Dendritic cell treated with granulocyte-macrophage colony-stimulating factor and Interleukin-4, amounts not matched to agents 40 ng/mL and 50 ng/mL, for 4 days (primary cell): ENCODE measurements at regions of chr1 and their contacts with region 1.

Region 1: GRCh38 chr1:54810100-54810942 is 9.2 kb upstream of the TTC22 start:
- H3K4me3 Mint-ChIP-seq: no peak overlapping the region
- H3K27ac Mint-ChIP-seq: no peak overlapping the region
- H3K4me1 Mint-ChIP-seq: peaks cover 10% of the 10 kb centered on the region
- H3K27me3 Mint-ChIP-seq: peaks cover 1% of the 10 kb centered on the region

Region 2: DNA sequence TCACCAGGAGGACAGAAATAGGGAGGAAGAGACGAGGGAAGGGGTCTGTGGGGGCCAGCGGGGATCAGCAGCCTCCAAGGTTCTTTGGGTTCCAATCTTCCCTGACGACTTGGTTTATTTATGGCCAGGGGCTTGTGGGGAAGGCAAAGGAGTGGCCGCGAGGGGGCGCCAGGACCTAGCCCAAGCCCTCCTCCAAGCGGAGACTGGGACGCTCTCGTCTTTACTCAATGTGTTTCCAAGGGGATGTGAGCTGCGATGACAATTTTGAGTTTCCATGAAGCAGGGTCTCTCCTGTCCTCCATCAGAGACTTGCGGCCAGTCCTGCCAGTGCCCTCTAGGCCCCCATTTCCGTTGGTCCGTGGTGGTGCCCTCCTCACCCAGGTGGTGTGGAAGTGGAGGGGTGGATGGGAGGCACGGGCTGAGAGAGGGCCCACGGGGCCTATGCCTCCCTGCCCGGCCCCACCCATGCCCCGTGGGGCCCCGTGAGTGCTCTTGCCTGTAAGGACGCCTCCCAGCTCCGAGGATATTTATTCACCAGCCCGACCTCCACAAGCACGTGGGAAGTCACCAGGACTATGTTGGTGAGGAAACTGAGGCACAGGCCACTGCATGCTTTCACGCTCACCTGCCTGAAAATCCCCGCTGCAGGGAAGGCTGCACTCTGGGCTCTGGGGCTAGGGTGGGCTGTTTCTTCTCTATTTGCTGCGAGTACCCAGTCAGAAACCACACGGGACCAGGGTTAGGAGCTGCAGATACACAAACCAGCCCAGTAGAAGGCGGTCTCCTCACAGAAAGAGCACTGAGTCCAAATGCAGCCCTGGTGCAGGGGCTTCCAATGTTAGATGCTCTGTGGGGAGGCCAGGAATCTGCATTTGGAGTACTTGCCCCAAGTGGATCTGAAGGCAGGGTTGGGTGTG is 1324.6 kb before region 1 on chr1:
- intact Hi-C with region 1: loop called (anchors 5 kb)
- H3K4me3 Mint-ChIP-seq: no peak overlapping the region
- H3K27ac Mint-ChIP-seq: no peak overlapping the region
- H3K4me1 Mint-ChIP-seq: no peaks in the 10 kb centered on the region
- H3K27me3 Mint-ChIP-seq: peaks cover 7% of the 10 kb centered on the region

Region 3: DNA sequence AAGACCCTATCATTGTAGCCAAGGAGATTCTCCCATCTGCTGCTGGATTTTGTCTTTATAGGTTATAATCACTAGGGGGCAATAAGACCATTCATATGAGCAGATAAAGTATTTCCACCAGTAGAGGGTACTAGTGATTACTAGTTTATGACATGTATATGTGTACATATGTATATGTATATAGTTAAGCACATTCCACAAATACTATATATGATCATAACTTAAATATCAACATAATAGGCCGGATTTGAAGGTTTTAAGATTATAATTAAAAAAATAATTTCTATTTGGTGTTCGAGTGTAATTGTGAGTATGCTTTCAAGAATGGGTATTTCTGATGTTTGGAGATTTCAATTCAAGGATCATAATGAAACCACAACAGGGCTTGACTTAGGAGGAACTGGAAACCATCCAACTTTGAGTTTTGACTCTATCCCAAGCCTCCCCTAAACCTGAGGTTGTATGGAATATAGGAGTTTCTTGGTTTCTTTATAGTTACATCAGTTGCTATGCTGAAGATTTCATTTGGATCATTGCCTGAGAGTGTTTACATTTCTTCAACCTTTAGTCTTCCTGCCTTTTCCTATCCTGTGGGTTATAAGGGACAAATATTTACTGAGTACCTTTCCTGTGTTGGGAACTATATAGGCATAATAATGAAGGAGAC is 740.0 kb before region 1 on chr1:
- intact Hi-C with region 1: loop called (anchors 2 kb)
- H3K4me3 Mint-ChIP-seq: no peak overlapping the region
- H3K27ac Mint-ChIP-seq: no peak overlapping the region
- H3K4me1 Mint-ChIP-seq: peaks cover 7% of the 10 kb centered on the region
- H3K27me3 Mint-ChIP-seq: no peaks in the 10 kb centered on the region

Region 4: DNA sequence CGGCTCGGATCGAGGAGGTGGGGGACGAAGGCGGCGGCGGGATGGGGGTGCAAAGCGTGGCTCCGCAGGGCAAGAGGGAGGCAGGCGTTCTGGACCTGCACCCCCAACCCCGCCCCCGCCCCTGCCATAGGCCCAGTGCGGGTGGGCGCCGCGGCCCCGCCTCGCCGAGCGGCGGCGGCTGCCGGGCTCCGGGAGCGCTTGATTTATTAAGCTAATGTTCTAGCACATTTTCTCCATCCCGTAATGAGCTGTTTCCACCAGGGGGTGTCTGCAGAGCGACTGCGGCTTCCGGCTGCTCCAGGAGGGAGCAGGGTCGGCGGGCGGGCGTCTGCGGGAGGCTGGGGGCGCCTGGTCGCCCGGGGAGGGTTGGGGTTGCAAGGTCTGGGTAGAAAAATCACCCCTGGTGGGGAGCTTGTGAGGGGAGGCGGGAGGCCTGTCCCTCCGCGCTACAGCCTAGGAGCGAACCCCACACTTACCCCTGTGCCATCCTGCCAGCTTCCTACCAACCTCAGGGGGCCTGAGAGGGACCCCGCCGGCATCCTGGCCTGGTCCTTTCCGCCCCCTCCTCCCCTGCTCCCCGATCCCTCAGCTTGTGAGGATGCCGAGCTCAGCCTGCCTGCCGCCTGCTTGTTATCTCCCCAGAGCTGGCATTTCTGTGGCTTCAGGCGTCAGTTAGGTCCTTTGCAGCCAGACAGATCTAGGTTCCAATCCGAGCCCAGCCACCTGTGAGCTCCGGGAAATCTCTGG is 310.8 kb before region 1 on chr1:
- intact Hi-C with region 1: loop called (anchors 10 kb)
- H3K4me3 Mint-ChIP-seq: peak overlapping the region; percentile 24
- H3K27ac Mint-ChIP-seq: no peak overlapping the region
- H3K4me1 Mint-ChIP-seq: peaks cover 5% of the 10 kb centered on the region
- H3K27me3 Mint-ChIP-seq: peaks cover 51% of the 10 kb centered on the region

Region 5: GRCh38 chr1:54671985-54672608 is 138.2 kb before region 1 on chr1:
- intact Hi-C with region 1: loop called (anchors 1 kb)
- H3K4me3 Mint-ChIP-seq: no peak overlapping the region
- H3K27ac Mint-ChIP-seq: no peak overlapping the region
- H3K4me1 Mint-ChIP-seq: no peaks in the 10 kb centered on the region
- H3K27me3 Mint-ChIP-seq: no peaks in the 10 kb centered on the region